Naive thymus-derived CD4-positive, alpha-beta T cell (primary cell): ENCODE measurements at regions of chr1 and their contacts with region 1.

Region 1: GRCh38 chr1:48776393-48777218 is at the start of gene BEND5:
- DNase-seq: peak; percentile 39 to 79 (median 72)
- ATAC-seq: peak; percentile 88
- H3K4me3 ChIP-seq: peak within 1 kb of the TSS; percentile 83
- H3K4me3 Mint-ChIP-seq: peak within 1 kb of the TSS; percentile 90 to 100 (median 95)
- H3K27ac ChIP-seq: peak within 1 kb of the TSS; percentile 77
- H3K27ac Mint-ChIP-seq: peak within 1 kb of the TSS; percentile 85 to 98 (median 94)
- H3K4me1 ChIP-seq: peaks cover 0 to 12% of the 10 kb centered on the region in 2 donors
- H3K4me1 Mint-ChIP-seq: peaks cover 29 to 63% (median 59%) of the 10 kb centered on the region in 7 donors
- H3K27me3 ChIP-seq: no peaks in the 10 kb centered on the region
- H3K27me3 Mint-ChIP-seq: peaks cover 0 to 4% (median 0%) of the 10 kb centered on the region in 5 donors
- total RNA-seq, gene BEND5: 5.6 to 12.6 (median 9.9) TPM

Region 2: DNA sequence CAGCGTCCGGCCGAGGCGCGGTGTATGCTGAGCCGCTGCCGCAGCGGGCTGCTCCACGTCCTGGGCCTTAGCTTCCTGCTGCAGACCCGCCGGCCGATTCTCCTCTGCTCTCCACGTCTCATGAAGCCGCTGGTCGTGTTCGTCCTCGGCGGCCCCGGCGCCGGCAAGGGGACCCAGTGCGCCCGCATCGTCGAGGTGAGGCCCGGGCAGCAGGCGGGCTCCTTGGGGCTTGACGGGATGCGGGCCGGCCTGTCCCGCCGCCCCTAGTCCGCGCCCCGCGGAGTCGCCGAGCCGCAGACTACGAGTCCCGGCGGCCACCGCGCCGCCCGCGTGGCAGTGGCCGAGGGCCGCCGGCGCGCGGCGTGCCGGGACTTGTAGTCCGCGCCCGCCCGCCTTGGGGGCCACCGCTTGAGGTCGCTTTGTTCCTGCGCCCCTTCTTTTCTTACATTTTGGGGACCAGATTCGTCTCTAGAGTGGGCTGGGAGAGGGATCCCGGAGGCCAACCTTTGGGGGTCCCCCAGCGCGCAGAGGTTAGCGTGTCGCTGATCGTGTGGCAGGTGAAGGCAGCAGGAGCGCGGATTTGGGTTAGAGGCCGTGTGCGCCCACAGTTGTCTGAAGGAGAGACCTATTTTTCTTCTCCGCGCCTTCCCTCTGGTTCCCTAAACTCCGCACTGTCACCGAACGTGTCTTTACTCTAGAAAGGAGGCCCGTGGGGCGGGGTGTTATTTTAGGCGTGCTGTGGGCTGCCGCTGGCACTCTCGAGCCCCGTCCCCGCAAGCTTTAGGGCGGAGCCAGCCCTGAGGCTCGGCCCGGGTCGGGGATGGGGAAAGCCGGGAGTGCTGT is 1442.5 kb before region 1 on chr1:
- CTCF ChIA-PET with region 1: no interaction called
- POLR2A ChIA-PET with region 1: no interaction called
- intact Hi-C with region 1: loop called in 1 of 2 experiments (anchors 2 kb)
- DNase-seq: peak; percentile 63 to 82 (median 77)
- ATAC-seq: peak; percentile 93
- H3K4me3 ChIP-seq: peak overlapping the region; percentile 87
- H3K4me3 Mint-ChIP-seq: peak overlapping the region in 6 of 10 donors; percentile 90 to 94 (median 92)
- H3K27ac ChIP-seq: peak overlapping the region; percentile 92
- H3K27ac Mint-ChIP-seq: peak overlapping the region in 6 of 9 donors; percentile 76 to 94 (median 92)
- H3K4me1 ChIP-seq: peaks cover 6 to 16% of the 10 kb centered on the region in 2 donors
- H3K4me1 Mint-ChIP-seq: peaks cover 12 to 34% (median 22%) of the 10 kb centered on the region in 7 donors
- H3K27me3 ChIP-seq: no peaks in the 10 kb centered on the region
- H3K27me3 Mint-ChIP-seq: no peaks in the 10 kb centered on the region

Region 3: DNA sequence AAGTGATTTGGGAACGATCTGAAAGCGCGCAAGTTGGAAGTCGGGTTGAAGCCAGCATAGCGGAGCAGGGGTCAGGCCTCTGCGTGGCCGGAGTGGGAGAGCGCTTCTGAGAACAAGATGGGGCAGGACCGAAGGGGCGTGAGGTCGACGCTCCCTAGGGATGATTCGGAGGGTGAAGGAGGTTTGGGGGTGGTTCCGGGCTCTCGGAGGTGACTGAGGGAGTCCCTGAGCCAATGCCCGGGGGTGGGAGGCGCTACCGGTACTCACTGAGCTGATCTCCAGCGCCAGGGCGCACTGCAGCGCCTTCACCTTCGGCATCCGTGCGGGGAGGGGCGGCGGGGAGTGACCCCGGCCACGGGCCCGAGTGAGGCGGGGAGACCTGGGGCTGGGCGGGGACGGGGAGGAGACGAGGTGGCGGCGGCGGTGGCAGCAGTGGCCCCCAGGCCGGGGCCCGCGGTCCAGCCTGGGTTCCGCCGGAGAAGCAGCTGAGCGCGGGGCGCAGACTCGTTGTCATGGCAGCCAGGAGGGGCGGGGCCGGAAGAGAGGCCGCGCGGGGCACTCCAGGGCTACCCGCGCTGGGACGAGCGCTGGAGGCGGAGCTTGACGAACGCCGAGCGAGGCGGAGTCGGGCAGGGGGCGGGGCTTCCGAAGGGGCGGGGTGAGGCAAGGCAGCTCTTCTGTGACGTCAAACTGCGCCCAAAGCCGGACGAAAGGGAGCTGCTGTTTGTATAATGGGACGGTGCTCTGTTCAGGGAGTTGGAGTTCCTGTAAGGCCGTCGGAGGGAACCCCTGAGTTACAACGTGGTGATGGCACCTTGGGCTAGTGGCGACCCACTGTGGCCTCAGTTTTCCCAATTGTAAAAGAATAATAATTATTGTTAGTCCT is 304.7 kb before region 1 on chr1 and contains the start of gene SPATA6:
- CTCF ChIA-PET with region 1: no interaction called
- POLR2A ChIA-PET with region 1: no interaction called
- intact Hi-C with region 1: loop called (anchors 2 to 5 kb)
- DNase-seq: peak; percentile 86 to 95 (median 91)
- ATAC-seq: peak; percentile 97
- H3K4me3 ChIP-seq: peak within 1 kb of the TSS; percentile 82
- H3K4me3 Mint-ChIP-seq: peak within 1 kb of the TSS; percentile 83 to 96 (median 92)
- H3K27ac ChIP-seq: peak within 1 kb of the TSS; percentile 75
- H3K27ac Mint-ChIP-seq: peak within 1 kb of the TSS; percentile 61 to 92 (median 88)
- H3K4me1 ChIP-seq: peaks cover 6 to 23% of the 10 kb centered on the region in 2 donors
- H3K4me1 Mint-ChIP-seq: peaks cover 22 to 42% (median 32%) of the 10 kb centered on the region in 7 donors
- H3K27me3 ChIP-seq: no peaks in the 10 kb centered on the region
- H3K27me3 Mint-ChIP-seq: peaks cover 0 to 27% (median 0%) of the 10 kb centered on the region in 5 donors
- total RNA-seq, gene SPATA6: 1.0 to 11.2 (median 5.4) TPM